Breast epithelium (tissue), 4 donors: ENCODE measurements at regions of chr5 and their contacts with region 1.

Region 1: GRCh38 chr5:58773744-58774441 is 191.0 kb downstream of the RAB3C start:
- DNase-seq: no peak
- H3K4me3 ChIP-seq: no peak overlapping the region
- H3K27ac ChIP-seq: no peak overlapping the region
- H3K4me1 ChIP-seq: no peaks in the 10 kb centered on the region
- H3K27me3 ChIP-seq: no peaks in the 10 kb centered on the region
- CTCF ChIP-seq: no peak
- POLR2A ChIP-seq: no peak

Region 2: GRCh38 chr5:57291894-57292293 is 1482.0 kb before region 1 on chr5:
- intact Hi-C with region 1: no loop called
- DNase-seq: no peak
- H3K4me3 ChIP-seq: no peak overlapping the region
- H3K27ac ChIP-seq: no peak overlapping the region
- H3K4me1 ChIP-seq: no peaks in the 10 kb centered on the region
- H3K27me3 ChIP-seq: no peaks in the 10 kb centered on the region
- CTCF ChIP-seq: no peak
- POLR2A ChIP-seq: no peak

Region 3: DNA sequence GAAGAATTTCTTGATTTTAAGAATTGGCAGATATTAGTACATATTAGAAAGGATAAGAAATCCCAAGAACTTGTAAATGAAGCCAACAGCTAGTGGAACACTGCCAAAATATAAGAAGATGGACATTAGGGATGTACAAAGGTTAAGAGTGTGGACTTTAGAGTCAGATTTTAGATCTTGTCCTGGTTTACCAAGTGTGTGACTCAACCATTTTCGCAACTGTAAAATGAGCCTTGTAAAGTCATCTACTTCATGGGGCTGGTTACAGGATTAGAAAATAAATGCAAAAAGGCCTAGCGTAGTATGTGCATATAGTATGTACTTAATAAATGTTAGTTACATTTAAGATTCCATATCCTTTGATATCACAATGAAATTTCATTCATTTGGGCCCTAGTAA is 69.0 kb after region 1 on chr5:
- intact Hi-C with region 1: loop called (anchors 2 kb)
- DNase-seq: no peak
- H3K4me3 ChIP-seq: no peak overlapping the region
- H3K27ac ChIP-seq: no peak overlapping the region
- H3K4me1 ChIP-seq: no peaks in the 10 kb centered on the region
- H3K27me3 ChIP-seq: no peaks in the 10 kb centered on the region
- CTCF ChIP-seq: no peak
- POLR2A ChIP-seq: no peak

Region 4: GRCh38 chr5:59569608-59570334 is 795.9 kb after region 1 on chr5:
- intact Hi-C with region 1: no loop called
- DNase-seq: no peak
- H3K4me3 ChIP-seq: no peak overlapping the region
- H3K27ac ChIP-seq: no peak overlapping the region
- H3K4me1 ChIP-seq: no peaks in the 10 kb centered on the region
- H3K27me3 ChIP-seq: no peaks in the 10 kb centered on the region
- CTCF ChIP-seq: no peak
- POLR2A ChIP-seq: no peak